Mammary epithelial cell (primary cell): ENCODE measurements at regions of chr12 and their contacts with region 1.

Region 1: GRCh38 chr12:124680863-124681778 is 113.7 kb upstream of the NCOR2 start:
- DNase-seq: peak; percentile 97
- H3K4me3 ChIP-seq: no peak overlapping the region
- H3K27ac ChIP-seq: peak overlapping the region; percentile 42
- H3K4me1 ChIP-seq: peaks cover 43% of the 10 kb centered on the region
- H3K27me3 ChIP-seq: no peaks in the 10 kb centered on the region
- CTCF ChIP-seq: peak; percentile 34 to 61

Region 2: DNA sequence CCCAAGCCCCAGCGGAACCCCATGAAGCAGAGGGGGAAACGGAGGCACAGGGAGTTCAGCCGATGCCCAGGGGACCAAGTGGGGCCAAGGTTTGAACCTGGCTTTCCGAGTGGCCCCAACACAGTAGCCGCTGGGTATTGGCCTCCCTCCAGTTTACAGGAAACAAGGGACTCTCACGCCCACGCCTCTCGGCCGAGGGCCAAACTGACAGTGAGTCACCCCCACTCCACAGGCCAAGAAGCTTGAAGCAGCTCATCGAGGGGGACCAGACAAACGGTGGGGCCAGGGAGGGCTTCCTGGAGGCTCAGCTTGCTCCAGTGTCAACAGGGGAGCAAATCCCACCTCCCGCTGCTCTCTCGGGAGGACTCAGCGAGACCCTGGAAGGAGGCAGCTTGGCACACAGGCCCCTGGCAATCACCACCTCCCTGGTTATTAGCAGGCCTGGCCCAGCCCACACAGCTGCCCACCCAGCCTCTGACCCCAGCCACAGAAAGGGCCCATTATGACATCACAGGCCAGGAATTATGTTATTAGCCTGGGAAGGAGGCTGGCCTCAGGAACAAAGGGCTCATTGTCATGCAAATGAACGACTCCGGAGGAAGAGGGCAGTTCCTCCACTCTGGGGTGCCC is 168.3 kb before region 1 on chr12:
- CTCF ChIA-PET with region 1: no interaction called
- dilution Hi-C with region 1: loop called (anchors 5 kb)
- in situ Hi-C with region 1: no loop called
- intact Hi-C with region 1: loop called (anchors 2 kb)
- DNase-seq: peak; percentile 95
- H3K4me3 ChIP-seq: peak overlapping the region in 1 of 3 experiments; percentile 11
- H3K27ac ChIP-seq: peak overlapping the region; percentile 62
- H3K4me1 ChIP-seq: peaks cover 88% of the 10 kb centered on the region
- H3K27me3 ChIP-seq: no peaks in the 10 kb centered on the region
- CTCF ChIP-seq: no peak

Region 3: GRCh38 chr12:124578445-124578844 is 102.7 kb before region 1 on chr12:
- CTCF ChIA-PET with region 1: no interaction called
- dilution Hi-C with region 1: loop called (anchors 5 kb)
- in situ Hi-C with region 1: no loop called
- intact Hi-C with region 1: no loop called
- DNase-seq: no peak
- H3K4me3 ChIP-seq: no peak overlapping the region
- H3K27ac ChIP-seq: no peak overlapping the region
- H3K4me1 ChIP-seq: peaks cover 24% of the 10 kb centered on the region
- H3K27me3 ChIP-seq: no peaks in the 10 kb centered on the region
- CTCF ChIP-seq: peak in 1 of 2 donors; percentile 39

Region 4: DNA sequence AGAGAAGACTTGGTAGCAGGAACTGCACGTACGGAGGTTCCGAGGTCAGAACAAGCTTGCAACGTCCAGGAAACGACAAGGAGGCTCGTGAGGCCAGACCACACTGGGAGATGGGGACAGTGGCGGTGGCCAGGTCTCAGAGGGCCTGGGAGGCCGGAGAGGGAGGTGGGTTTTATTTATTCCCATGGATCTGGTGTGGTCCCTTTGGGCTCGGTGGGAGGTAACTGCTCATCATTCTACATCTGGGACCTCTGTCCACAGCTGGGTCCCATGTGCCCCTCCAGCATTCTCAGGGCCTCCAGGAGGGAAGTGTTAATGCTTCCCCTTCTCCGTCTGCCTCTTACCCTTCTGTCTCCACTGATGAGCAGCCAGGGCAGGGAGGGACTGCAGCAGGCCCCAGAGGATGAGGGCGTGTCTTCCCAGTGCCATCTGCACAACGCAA is 78.0 kb before region 1 on chr12:
- CTCF ChIA-PET with region 1: no interaction called
- dilution Hi-C with region 1: loop called (anchors 5 kb)
- in situ Hi-C with region 1: no loop called
- intact Hi-C with region 1: loop called (anchors 2 kb)
- DNase-seq: no peak
- H3K4me3 ChIP-seq: no peak overlapping the region
- H3K27ac ChIP-seq: no peak overlapping the region
- H3K4me1 ChIP-seq: peaks cover 5% of the 10 kb centered on the region
- H3K27me3 ChIP-seq: no peaks in the 10 kb centered on the region
- CTCF ChIP-seq: no peak

Region 5: GRCh38 chr12:124625867-124626675 is 55.0 kb before region 1 on chr12:
- CTCF ChIA-PET with region 1: no interaction called
- dilution Hi-C with region 1: loop called (anchors 10 kb)
- in situ Hi-C with region 1: no loop called
- intact Hi-C with region 1: loop called (anchors 2 kb)
- DNase-seq: peak; percentile 71
- H3K4me3 ChIP-seq: no peak overlapping the region
- H3K27ac ChIP-seq: no peak overlapping the region
- H3K4me1 ChIP-seq: peaks cover 37% of the 10 kb centered on the region
- H3K27me3 ChIP-seq: no peaks in the 10 kb centered on the region
- CTCF ChIP-seq: no peak

Region 6: DNA sequence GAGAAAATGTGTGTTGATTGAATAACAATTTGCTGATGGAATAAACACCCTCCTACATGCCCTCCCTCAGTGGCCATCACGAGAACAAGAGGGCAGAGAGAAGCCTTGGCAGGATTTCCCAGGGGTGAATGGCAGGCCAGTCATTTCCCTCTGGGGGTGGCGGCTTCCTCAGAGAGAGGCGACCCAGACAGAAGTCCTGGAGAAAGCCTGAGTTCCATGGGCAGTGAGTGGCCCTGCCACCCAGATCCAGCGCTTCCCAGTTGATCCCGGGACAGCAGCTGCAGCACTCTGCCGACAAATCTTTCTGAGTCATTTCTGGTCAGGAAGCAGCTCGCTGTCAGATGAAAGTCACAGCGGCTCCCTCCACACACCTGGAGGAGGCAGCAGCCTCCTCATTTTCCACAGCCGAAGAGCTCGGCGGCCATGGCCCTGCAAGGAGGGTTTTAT is 59.6 kb after region 1 on chr12:
- CTCF ChIA-PET with region 1: no interaction called
- dilution Hi-C with region 1: no loop called
- in situ Hi-C with region 1: no loop called
- intact Hi-C with region 1: no loop called
- DNase-seq: peak; percentile 83
- H3K4me3 ChIP-seq: no peak overlapping the region
- H3K27ac ChIP-seq: no peak overlapping the region
- H3K4me1 ChIP-seq: peaks cover 15% of the 10 kb centered on the region
- H3K27me3 ChIP-seq: no peaks in the 10 kb centered on the region
- CTCF ChIP-seq: peak; percentile 28 to 58

Region 7: GRCh38 chr12:124786061-124786964 is 105.2 kb after region 1 on chr12:
- CTCF ChIA-PET with region 1: no interaction called
- dilution Hi-C with region 1: loop called (anchors 5 kb)
- in situ Hi-C with region 1: no loop called
- intact Hi-C with region 1: no loop called
- DNase-seq: peak; percentile 53
- H3K4me3 ChIP-seq: no peak overlapping the region
- H3K27ac ChIP-seq: no peak overlapping the region
- H3K4me1 ChIP-seq: peaks cover 3% of the 10 kb centered on the region
- H3K27me3 ChIP-seq: no peaks in the 10 kb centered on the region
- CTCF ChIP-seq: no peak